ENCODE measurements at regions of chr5 and their contacts with region 1.

Region 1: DNA sequence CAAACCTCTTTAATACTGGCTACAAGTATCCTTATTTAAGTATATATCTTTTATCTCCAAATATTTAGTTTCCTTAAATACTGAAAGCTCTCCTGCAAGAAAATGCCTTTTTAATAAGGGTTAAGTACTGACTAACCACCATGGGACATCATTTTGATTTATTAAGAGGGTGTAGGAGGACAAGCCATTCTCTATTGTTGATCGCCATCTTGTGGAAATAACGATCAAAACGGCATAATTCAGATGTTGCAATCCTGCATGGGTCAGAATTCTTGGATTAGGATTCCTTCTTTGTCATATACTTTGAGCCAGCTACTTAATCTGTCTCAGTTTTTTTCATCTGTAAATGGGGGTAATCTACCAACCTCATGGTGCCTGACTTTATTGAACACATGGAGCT is 28.7 kb upstream of the C5orf46 start:
- DNase-seq: peak; percentile 39
- ATAC-seq: peak; percentile 81
- H3K4me3 ChIP-seq: no peak overlapping the region
- H3K27ac ChIP-seq: no peak overlapping the region
- H3K4me1 ChIP-seq: no peaks in the 10 kb centered on the region
- H3K27me3 ChIP-seq: peaks cover 11% of the 10 kb centered on the region; the same call in 1 of the 2 replicates
- CTCF ChIP-seq: peak; percentile 22 to 76 (median 49); a peak in 4 of 6 replicates
- POLR2A ChIP-seq: no peak
- RAD21 ChIP-seq: peak; percentile 81

Region 2: DNA sequence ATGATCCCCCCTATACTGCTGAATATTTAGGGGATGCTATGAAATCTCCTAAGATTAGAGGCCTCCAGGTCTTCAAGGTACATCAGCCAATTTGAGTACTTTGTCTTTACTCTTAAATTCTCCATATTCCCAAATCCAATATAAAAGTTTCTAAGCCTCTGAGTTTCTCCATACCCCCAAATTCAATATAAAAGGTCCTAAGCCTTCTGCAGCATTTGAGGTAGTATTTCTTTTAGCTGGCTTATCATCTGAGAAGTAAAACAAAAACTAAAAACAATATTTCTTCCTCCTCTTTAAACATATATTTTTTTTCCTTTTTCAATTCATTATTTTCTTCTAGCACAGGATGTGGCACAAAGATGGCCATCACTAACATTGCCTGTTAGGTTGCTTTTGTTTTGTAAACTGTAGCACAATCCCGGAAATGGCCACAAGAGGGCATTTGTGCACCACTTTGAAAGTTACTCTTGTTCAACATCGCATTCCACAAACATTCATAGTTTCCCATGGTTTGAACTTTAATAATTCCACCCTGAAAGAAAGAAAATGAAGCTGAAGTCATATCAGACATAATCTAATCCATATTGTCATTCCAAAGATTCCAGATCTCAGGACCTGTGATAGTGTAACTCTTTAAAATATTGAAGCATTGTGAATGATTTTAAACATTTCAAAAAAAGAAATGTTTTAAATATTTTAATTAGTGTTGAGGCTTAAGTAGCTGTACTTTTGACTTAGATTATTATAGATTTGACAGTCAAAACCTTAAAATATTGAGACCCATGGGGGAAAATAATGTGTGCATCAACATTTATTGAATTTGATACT is 77.5 kb before region 1 on chr5:
- CTCF ChIA-PET with region 1: interaction called, 34 read pairs
- POLR2A ChIA-PET with region 1: no interaction called
- RAD21 ChIA-PET with region 1: no interaction called
- intact Hi-C with region 1: loop called (anchors 1 kb)
- DNase-seq: peak; percentile 47
- ATAC-seq: peak; percentile 78
- H3K4me3 ChIP-seq: no peak overlapping the region
- H3K27ac ChIP-seq: no peak overlapping the region
- H3K4me1 ChIP-seq: no peaks in the 10 kb centered on the region
- H3K27me3 ChIP-seq: peaks cover 5% of the 10 kb centered on the region; the same call in 1 of the 2 replicates
- CTCF ChIP-seq: peak; percentile 57 to 81 (median 76); a peak in 5 of 6 replicates
- POLR2A ChIP-seq: no peak
- RAD21 ChIP-seq: peak; percentile 71

Region 3: GRCh38 chr5:147887024-147887627 is 47.9 kb before region 1 on chr5:
- CTCF ChIA-PET with region 1: interaction called, 24 read pairs
- POLR2A ChIA-PET with region 1: no interaction called
- RAD21 ChIA-PET with region 1: no interaction called
- intact Hi-C with region 1: loop called (anchors 1 kb)
- DNase-seq: peak; percentile 12
- ATAC-seq: peak; percentile 57
- H3K4me3 ChIP-seq: no peak overlapping the region
- H3K27ac ChIP-seq: no peak overlapping the region
- H3K4me1 ChIP-seq: no peaks in the 10 kb centered on the region
- H3K27me3 ChIP-seq: peaks cover 13% of the 10 kb centered on the region; the same call in 1 of the 2 replicates
- CTCF ChIP-seq: peak; percentile 45 to 71 (median 70); a peak in 5 of 6 replicates
- POLR2A ChIP-seq: no peak
- RAD21 ChIP-seq: peak; percentile 64

Measured in HCT116 (cell line).